ENCODE measurements at regions of chr15 and their contacts with region 1.

Region 1: DNA sequence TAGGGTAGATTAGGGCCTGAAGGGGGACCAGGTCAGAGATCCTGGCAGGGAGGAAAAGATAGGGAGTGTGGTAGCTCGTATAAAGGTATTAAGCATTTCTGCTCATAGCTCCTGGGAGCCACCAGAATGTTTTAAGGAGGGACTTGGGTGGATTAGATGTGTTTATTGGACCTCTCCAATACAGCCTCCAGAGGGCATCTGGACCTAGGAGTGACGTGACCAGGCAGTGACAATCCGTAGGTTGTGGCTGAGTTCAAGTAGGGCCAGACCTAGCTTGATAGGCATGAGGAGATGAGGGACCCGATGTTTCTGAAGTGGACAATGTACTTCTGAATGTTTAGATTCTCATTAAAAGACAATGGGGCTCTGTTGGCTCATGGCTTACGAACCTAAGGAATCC is 435.2 kb downstream of the MCTP2 start:
- DNase-seq: no peak
- ATAC-seq: no peak
- H3K4me3 ChIP-seq: no peak overlapping the region
- H3K27ac ChIP-seq: no peak overlapping the region
- H3K4me1 ChIP-seq: no peaks in the 10 kb centered on the region
- H3K27me3 ChIP-seq: no peaks in the 10 kb centered on the region
- CTCF ChIP-seq: no peak

Region 2: DNA sequence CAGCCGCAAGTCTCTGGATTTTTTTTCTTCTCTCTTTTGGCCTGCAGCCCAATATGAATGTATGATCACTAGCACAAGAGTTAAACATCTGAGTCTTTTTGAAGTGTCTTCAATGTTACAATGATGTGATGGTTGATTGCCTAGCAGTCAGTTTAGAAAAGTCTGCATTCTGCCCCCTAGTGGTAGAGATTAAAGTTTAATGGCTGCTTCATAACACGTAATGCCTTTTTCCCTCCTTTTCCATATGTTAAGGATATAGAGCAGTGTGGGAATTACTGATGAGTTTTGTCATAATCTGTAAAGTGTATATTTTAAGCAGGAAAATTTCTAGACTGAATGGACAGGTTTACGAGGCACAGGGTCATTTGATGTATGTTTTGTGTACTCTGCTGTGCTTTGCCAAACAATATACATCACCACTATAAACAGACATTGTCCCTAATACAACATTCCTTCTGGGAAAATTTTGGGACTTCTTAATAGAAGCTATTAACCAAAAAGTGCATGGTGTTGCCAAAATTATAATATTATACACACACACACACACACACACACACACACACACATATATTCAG is 625.4 kb after region 1 on chr15:
- intact Hi-C with region 1: loop called in 1 of 3 experiments (anchors 10 kb)
- DNase-seq: no peak
- ATAC-seq: peak in 3 of 4 donors; percentile 49 to 60 (median 56)
- H3K4me3 ChIP-seq: no peak overlapping the region
- H3K27ac ChIP-seq: no peak overlapping the region
- H3K4me1 ChIP-seq: no peaks in the 10 kb centered on the region
- H3K27me3 ChIP-seq: no peaks in the 10 kb centered on the region
- CTCF ChIP-seq: peak; percentile 35 to 65 (median 60)